Transverse colon (tissue), 4 donors: ENCODE measurements at regions of chr9 and their contacts with region 1.

Region 1: GRCh38 chr9:116212986-116213673 is 59.5 kb downstream of the PAPPA start:
- DNase-seq: no peak
- H3K4me3 ChIP-seq: no peak overlapping the region
- H3K27ac ChIP-seq: no peak overlapping the region
- H3K4me1 ChIP-seq: no peaks in the 10 kb centered on the region
- H3K27me3 ChIP-seq: no peaks in the 10 kb centered on the region
- CTCF ChIP-seq: no peak
- EP300 ChIP-seq: no peak
- POLR2A ChIP-seq: no peak

Region 2: GRCh38 chr9:116141864-116142561 is 71.1 kb before region 1 on chr9:
- in situ Hi-C with region 1: no loop called
- intact Hi-C with region 1: loop called (anchors 2 kb)
- DNase-seq: no peak
- H3K4me3 ChIP-seq: no peak overlapping the region
- H3K27ac ChIP-seq: no peak overlapping the region
- H3K4me1 ChIP-seq: no peaks in the 10 kb centered on the region
- H3K27me3 ChIP-seq: no peaks in the 10 kb centered on the region
- CTCF ChIP-seq: no peak
- EP300 ChIP-seq: no peak
- POLR2A ChIP-seq: no peak